ENCODE measurements at regions of chr21 and their contacts with region 1.

Region 1: GRCh38 chr21:34129039-34129891 is 55.9 kb downstream of the MRPS6 start:
- DNase-seq: peak; percentile 90
- H3K4me3 Mint-ChIP-seq: peak overlapping the region; percentile 60
- H3K27ac Mint-ChIP-seq: peak overlapping the region; percentile 92
- H3K4me1 Mint-ChIP-seq: peaks cover 83% of the 10 kb centered on the region
- H3K27me3 Mint-ChIP-seq: no peaks in the 10 kb centered on the region

Region 2: DNA sequence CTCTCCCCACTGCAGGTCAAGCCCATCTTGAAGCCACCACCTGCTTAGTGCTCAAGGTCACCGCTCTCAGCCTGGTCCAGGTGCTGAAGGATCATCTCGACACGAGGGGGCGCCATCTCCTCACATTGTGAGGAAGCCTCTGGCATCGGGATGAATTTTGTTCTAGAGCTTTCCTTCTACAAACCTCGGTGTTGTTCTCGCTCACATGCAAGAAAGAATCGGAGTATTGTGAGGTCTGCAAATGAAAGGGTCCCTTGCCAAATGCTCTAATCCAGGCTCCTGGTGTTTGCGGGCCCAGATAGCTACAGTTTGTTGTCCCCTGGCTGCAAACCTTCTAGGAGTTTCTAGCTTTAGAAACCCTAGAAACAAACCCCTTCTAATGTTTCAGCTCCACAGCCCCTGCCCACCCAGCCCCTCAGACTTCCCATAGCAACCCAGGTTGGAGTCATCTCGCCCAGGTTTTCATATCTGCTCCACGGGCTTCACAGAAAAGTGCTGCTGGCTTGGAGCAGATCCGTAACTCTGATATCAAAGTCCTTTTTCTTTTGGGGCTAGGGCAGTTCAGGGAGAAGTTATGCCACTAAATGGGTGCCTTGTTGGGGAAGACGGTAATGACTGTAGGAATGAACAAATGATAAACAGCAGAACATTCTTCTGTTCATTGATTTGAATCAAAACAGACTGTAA is 205.0 kb before region 1 on chr21:
- CTCF ChIA-PET with region 1: interaction called, 22 read pairs
- intact Hi-C with region 1: loop called (anchors 2 kb)
- DNase-seq: peak; percentile 96
- H3K4me3 Mint-ChIP-seq: no peak overlapping the region
- H3K27ac Mint-ChIP-seq: peak overlapping the region; percentile 24
- H3K4me1 Mint-ChIP-seq: peaks cover 10% of the 10 kb centered on the region
- H3K27me3 Mint-ChIP-seq: no peaks in the 10 kb centered on the region

Region 3: DNA sequence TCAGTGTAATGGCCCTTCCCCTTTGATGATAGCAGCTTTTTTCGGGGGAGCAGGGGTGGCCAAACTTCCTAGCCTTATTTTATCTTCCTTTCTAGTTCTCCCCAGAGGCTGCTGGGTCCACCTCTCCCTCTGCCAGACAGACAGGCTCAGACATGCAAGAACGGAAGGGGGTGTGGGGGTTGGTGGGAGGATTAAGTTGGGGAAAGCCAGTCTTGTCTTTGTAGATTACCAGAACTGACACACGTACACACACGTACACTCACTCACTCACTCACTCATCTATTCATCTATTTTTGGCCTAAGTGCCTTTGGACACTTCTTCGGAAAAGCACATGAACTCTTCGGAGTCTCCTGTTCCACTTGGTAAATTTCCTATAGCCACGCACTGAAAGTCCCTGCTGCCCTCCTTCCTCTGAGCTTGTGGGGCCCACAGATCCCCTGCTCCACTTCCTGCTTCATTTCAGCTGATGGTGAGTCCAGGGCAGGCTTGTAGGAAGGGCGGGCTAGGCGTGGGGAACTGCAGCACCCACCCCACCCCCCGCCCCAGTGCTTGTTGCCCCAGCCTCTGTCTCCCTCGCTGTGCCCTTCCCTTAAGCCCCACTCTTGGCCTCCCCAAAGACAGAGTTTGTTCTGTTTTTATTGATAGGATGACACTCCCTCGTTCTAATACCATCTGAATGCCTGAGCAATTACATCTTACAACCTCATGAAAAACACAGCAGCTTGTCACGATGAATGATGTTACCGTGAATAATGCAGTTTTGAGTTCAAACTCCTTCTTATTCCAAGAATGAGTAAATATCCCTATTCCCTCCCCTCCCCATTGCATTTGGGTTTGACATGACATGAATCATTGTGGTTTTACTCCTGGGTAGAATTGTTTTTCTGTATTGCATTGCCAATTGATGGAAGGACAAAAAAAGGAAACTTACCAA is 152.9 kb before region 1 on chr21:
- CTCF ChIA-PET with region 1: no interaction called
- intact Hi-C with region 1: loop called (anchors 1 kb)
- DNase-seq: peak; percentile 83
- H3K4me3 Mint-ChIP-seq: peak overlapping the region; percentile 70
- H3K27ac Mint-ChIP-seq: peak overlapping the region; percentile 99
- H3K4me1 Mint-ChIP-seq: peaks cover 52% of the 10 kb centered on the region
- H3K27me3 Mint-ChIP-seq: no peaks in the 10 kb centered on the region

Region 4: GRCh38 chr21:34091607-34092006 is 37.7 kb before region 1 on chr21:
- CTCF ChIA-PET with region 1: interaction called, 5 read pairs
- intact Hi-C with region 1: loop called (anchors 5 kb)
- DNase-seq: no peak
- H3K4me3 Mint-ChIP-seq: no peak overlapping the region
- H3K27ac Mint-ChIP-seq: no peak overlapping the region
- H3K4me1 Mint-ChIP-seq: peaks cover 44% of the 10 kb centered on the region
- H3K27me3 Mint-ChIP-seq: no peaks in the 10 kb centered on the region

Region 5: DNA sequence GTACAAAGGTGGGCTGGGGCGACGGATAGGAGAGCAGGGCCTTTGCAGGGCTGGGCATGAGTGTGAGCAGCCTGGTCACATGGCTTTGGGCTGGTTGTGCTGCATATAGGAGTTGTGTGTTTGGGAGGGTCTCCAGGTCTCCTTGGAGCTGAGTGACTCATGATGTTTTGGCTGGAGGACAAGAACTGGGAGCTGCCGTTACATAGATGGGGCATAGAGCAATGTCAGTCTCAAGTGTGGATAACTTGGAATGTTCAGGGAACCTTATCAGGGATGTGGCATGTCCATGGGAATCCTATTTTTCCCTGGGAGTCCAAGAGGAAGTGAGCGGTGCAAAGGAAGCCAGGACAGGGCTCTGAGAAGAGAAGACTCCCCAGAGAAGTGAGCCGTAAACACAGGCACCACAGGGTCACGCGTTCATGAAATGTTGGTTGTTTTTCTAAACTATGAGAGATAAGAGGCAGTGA is 98.2 kb after region 1 on chr21:
- CTCF ChIA-PET with region 1: no interaction called
- intact Hi-C with region 1: no loop called
- DNase-seq: no peak
- H3K4me3 Mint-ChIP-seq: no peak overlapping the region
- H3K27ac Mint-ChIP-seq: no peak overlapping the region
- H3K4me1 Mint-ChIP-seq: no peaks in the 10 kb centered on the region
- H3K27me3 Mint-ChIP-seq: no peaks in the 10 kb centered on the region

Region 6: GRCh38 chr21:34243562-34243961 is 114.3 kb after region 1 on chr21:
- CTCF ChIA-PET with region 1: no interaction called
- intact Hi-C with region 1: loop called (anchors 1 kb)
- DNase-seq: peak; percentile 60
- H3K4me3 Mint-ChIP-seq: no peak overlapping the region
- H3K27ac Mint-ChIP-seq: no peak overlapping the region
- H3K4me1 Mint-ChIP-seq: no peaks in the 10 kb centered on the region
- H3K27me3 Mint-ChIP-seq: no peaks in the 10 kb centered on the region